ENCODE measurements at regions of chr5 and their contacts with region 1.

Region 1: DNA sequence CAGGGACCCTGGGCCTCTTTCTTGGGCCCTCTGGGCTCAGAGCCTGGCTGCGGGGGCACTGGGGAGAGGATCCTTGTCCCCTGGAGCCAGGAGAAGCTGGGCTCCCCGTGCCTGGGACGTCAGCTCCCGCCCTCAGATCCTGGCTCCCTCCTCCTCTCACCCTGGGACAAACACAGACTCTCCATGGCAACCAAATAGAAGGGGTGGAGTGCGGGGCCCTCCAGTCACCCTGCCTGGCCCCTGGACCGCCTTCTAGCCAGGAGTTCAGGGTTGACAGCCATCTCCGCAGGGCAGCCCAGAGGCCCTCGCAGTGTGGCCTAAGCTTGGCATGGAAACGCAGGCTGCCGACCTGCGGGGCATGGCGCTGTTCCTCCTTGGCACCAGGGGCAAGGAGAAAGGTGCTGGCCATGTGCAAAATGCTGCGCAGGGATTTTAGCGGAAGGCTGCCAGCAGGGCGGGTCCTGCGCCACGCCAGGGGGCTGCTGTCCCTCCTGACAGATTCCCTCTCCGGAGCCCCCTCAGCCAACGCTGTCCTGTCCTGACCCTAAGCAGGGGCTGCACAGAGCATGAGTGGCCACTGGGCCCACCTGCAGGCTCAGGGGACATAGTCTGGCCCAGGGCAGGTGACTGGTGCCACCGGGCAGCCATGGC is 1.0 kb downstream of the ZDHHC11 start:
- DNase-seq: no peak
- H3K4me3 ChIP-seq: no peak overlapping the region
- H3K27ac ChIP-seq: no peak overlapping the region
- H3K4me1 ChIP-seq: no peaks in the 10 kb centered on the region
- CTCF ChIP-seq: no peak

Region 2: DNA sequence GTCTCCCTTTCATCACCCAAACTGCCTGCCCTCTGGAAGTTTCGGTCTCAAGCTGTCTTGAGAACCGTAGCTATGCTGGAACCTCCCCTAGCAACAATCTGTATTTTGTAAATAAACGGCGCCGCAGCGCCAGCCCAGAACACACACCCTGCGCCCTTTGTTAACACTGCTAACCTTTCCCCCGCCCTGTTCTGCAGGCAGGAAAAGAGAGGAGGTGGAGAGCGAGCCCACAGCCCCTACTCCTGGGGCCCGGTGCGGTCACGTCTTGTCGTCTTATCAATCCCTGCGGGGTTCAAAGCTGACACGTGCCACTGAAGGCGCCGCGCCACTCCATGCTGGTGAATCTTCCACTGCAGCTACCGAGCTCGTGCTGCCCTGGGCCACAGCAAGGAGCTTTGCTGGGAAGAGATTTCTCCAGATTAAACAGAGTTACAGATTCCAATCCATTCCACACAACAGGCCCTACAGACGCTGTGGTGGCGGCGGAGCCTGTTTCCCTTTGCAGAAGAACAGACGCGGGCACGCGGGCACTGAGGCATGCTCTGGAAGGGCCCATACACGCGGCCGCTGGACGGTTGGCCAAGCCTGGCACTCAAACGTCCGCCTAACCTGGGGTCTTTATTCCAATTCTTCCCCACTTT is 90.5 kb before region 1 on chr5:
- CTCF ChIA-PET with region 1: no interaction called
- POLR2A ChIA-PET with region 1: no interaction called
- intact Hi-C with region 1: loop called (anchors 5 kb)
- DNase-seq: no peak
- H3K4me3 ChIP-seq: no peak overlapping the region
- H3K27ac ChIP-seq: no peak overlapping the region
- H3K4me1 ChIP-seq: no peaks in the 10 kb centered on the region
- CTCF ChIP-seq: no peak

Region 3: GRCh38 chr5:821504-821903 is 28.3 kb before region 1 on chr5:
- CTCF ChIA-PET with region 1: no interaction called
- POLR2A ChIA-PET with region 1: no interaction called
- intact Hi-C with region 1: no loop called
- DNase-seq: no peak
- H3K4me3 ChIP-seq: no peak overlapping the region
- H3K27ac ChIP-seq: no peak overlapping the region
- H3K4me1 ChIP-seq: no peaks in the 10 kb centered on the region
- CTCF ChIP-seq: no peak